CD8-positive, alpha-beta T cell (primary cell): ENCODE measurements at regions of chr19 and their contacts with region 1.

Region 1: DNA sequence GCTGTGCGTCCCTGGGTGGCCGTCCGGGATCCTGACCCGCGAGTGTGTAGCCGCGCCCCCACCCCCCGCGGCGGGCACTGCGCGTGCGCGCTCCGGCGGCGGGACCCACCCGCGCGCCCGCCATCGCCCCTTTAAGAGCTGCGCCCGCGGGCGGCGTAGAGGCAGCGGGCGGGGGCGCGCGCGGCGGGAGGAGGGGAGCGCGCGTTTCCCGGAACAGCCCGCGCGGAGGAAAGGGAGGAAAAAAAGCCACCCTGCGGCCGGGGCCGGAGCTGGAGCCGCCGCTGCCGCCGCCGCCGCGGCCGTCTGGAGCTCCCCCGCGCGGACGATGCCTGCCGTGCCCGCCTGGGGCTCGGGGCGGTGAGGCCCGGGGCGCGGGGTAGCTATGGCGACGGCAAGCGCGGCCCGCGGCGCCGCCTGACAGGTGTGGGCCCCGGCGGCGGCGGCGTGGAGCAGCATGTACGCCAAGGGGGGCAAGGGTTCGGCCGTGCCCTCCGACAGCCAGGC is at the start of gene SSBP4:
- DNase-seq: peak; percentile 43 to 87 (median 61)
- ATAC-seq: peak; percentile 50
- H3K4me3 ChIP-seq: peak within 1 kb of the TSS; percentile 55 to 74
- H3K4me3 Mint-ChIP-seq: peak within 1 kb of the TSS; percentile 84
- H3K27ac ChIP-seq: peak within 1 kb of the TSS in 1 of 2 experiments; percentile 74
- H3K27ac Mint-ChIP-seq: peak within 1 kb of the TSS; percentile 91
- H3K4me1 ChIP-seq: peaks cover 87% of the 10 kb centered on the region
- H3K4me1 Mint-ChIP-seq: peaks cover 77% of the 10 kb centered on the region
- H3K27me3 ChIP-seq: peaks cover 0 to 7% of the 10 kb centered on the region in 2 experiments
- H3K27me3 Mint-ChIP-seq: peaks cover 14% of the 10 kb centered on the region
- CTCF ChIP-seq: no peak
- total RNA-seq, gene SSBP4: 49.9 to 58.2 TPM

Region 2: DNA sequence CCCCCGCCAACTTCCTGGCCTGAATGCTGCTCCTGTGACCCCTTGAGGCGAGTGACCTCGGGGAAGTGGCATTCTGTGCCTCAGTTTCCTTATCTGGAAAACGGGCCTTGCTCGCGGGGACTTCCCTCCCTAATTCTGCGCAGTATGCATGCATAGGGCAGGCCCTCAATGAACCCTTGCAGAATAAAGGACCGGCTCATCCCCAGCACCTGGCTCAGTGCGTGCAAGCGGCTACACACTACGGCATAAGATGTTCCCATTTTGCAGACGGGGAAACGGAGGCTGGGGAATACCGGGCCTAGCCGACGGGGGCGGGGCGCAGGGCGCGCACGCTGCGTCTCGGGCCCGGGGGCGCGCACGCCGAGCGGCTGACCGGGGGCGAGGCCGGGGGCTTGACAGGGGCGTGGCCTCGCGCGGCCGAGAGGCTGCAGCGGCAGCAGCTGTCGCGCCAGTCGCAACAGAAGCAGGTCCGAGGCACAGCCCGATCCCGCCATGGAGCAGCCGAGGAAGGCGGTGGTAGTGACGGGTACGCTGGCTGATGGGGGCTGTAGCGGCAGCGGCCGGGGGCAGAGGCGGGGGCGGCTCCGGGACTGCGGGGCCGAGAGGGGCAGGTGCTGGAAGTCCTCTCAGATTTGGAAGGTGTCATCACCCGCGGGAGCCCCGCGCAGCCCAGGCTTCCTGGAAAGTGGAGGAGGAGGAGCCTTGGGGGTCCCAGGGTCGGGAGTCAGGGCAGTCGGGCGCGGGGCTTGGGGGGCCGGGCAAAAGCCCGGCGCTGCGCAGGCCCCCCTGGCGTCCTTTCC is 78.9 kb before region 1 on chr19 and contains the start of gene PGPEP1:
- CTCF ChIA-PET with region 1: interaction called, 4 read pairs
- POLR2A ChIA-PET with region 1: no interaction called
- intact Hi-C with region 1: loop called in 1 of 2 experiments (anchors 5 kb)
- DNase-seq: peak; percentile 13 to 84 (median 67)
- ATAC-seq: peak; percentile 39
- H3K4me3 ChIP-seq: peak within 1 kb of the TSS; percentile 50 to 75
- H3K4me3 Mint-ChIP-seq: peak within 1 kb of the TSS; percentile 88
- H3K27ac ChIP-seq: peak within 1 kb of the TSS; percentile 49 to 51
- H3K27ac Mint-ChIP-seq: peak within 1 kb of the TSS; percentile 85
- H3K4me1 ChIP-seq: peaks cover 15% of the 10 kb centered on the region
- H3K4me1 Mint-ChIP-seq: peaks cover 13% of the 10 kb centered on the region
- H3K27me3 ChIP-seq: no peaks in the 10 kb centered on the region
- H3K27me3 Mint-ChIP-seq: no peaks in the 10 kb centered on the region
- CTCF ChIP-seq: no peak
- total RNA-seq, gene PGPEP1: 20.0 to 25.2 TPM

Region 3: DNA sequence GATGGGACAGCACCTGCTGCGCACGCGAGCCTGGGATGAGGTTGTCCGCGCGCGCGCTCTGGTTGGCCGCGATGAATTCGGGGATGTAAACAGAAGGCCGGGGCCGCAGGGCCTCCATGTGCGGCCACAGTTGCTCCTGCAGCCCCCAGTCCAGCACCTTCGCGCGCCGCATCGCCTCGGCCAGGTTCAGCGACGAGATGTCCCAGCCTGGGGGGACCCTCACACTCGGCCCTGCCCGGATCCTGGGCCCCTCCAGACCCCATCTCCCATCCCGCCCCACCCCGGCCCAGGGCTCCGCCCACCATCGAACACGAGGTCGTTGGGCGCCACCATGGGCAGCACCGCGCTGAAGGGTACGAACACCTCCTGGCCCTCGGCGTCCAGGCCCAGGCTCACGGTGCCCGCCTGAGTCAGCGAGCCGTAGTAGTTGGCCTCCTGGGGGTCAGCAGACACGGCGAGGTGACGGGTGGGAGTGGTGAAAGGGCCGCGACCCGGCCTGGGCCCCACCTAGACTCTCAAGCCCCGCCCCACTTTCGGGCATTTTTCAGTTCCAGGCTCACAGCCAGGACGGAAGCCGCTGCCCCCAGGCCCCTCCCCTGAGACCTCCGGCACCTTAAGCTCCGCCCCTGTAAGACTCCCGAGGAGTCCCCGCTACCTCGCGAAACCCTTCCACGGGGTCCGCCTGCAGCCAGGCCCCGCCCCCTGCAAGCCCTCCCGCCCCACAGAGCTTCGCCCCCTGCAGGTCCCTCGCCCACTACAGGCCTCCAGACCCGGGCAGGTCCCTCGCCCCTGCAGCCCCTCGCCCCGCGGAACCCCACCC is 17.6 kb after region 1 on chr19:
- CTCF ChIA-PET with region 1: interaction called, 8 read pairs
- POLR2A ChIA-PET with region 1: interaction called, 6 read pairs
- intact Hi-C with region 1: loop called in 1 of 2 experiments (anchors 2 kb)
- DNase-seq: peak; percentile 65 to 94 (median 87)
- ATAC-seq: peak; percentile 74
- H3K4me3 ChIP-seq: peak overlapping the region; percentile 57 to 65
- H3K4me3 Mint-ChIP-seq: peak overlapping the region; percentile 81
- H3K27ac ChIP-seq: peak overlapping the region in 1 of 2 experiments; percentile 48
- H3K27ac Mint-ChIP-seq: peak overlapping the region; percentile 41
- H3K4me1 ChIP-seq: peaks cover 26% of the 10 kb centered on the region
- H3K4me1 Mint-ChIP-seq: peaks cover 24% of the 10 kb centered on the region
- H3K27me3 ChIP-seq: no peaks in the 10 kb centered on the region
- H3K27me3 Mint-ChIP-seq: no peaks in the 10 kb centered on the region
- CTCF ChIP-seq: no peak